ENCODE measurements at regions of chr12 and their contacts with region 1.

Region 1: DNA sequence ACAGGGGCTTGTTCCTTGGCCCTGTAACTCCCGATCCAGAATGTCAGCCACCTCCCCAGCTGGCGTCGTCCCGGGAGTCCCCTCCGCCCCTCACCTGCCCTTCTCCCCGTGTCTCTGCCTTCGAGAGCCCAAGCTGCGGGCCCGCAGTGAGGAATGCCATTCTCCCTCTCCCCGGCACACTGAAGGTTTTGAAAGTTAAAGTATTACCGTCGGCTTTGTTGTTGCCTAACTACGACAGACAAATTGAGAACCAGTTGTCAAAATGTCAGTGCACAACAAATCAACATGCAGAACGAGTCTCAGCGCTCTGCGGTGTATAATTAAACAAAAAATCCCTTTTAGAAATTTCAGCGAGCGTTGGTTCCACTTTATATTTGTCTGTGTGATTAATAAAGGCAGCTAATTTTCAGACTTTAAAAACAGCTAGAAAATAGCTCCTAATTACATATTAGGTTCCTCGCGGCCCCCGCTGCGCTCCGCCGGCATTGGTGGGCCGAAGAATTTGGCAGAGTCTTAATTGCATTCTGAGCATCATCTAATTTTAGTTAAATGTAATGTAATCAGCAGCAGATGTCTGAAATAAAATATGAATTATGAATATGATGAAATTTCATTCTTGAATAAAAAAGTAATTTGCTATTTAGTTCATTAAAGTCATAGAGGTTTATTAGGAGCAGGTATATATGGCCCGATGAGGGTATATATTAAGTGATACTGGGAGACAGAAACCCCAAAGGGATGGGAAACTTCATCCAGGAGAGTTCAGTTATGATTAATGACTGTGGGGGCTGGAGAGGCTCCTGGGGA is 40.3 kb downstream of the MVK start:
- DNase-seq: no peak
- ATAC-seq: no peak

Region 2: DNA sequence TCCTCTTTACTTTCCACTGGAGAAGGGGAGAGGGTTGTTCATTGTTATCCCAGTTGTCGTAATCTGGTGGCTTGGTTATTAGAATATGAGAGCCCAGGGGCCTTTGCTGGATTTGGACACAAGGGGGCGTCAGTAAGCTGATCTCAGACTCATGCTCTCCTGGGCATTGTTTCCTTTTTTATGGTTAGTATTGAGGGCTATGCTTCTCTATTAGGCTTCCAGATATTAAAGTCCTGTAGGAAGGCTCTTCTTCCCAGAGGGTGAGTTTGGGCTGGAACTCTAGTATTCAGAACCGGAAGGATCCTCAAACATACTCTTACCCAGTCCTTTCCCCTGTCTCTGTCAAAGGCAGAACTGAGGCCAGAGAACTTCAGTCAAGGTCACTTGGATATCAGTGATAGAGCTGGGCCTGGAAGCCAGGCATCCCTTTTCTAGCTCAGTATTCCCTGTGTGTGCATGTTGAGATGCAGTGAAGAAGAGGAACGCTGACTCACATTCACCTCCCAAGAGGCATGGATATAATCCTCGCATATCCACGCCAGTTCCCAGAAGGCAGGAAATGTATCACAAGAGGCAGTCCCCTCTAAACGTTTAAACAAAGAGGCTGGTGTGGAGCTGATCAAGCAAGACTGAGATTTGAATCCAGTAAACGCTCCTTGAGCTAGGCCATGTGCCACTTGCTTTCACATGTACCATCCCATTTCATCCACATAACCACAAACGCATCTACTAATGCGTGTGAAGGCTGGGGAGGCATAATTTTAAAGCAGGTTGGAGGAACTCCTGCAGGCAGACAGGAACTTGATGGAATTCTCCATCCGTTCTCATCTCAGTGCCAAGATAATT is 94.8 kb before region 1 on chr12:
- intact Hi-C with region 1: no loop called
- DNase-seq: peak; percentile 71
- ATAC-seq: peak; percentile 57

Region 3: GRCh38 chr12:109673884-109674283 is 60.0 kb after region 1 on chr12:
- intact Hi-C with region 1: loop called (anchors 2 kb)
- DNase-seq: no peak
- ATAC-seq: no peak

Measured in left ventricle myocardium superior (tissue), 1 donor.